ENCODE measurements at regions of chr6 and their contacts with region 1.

Region 1: DNA sequence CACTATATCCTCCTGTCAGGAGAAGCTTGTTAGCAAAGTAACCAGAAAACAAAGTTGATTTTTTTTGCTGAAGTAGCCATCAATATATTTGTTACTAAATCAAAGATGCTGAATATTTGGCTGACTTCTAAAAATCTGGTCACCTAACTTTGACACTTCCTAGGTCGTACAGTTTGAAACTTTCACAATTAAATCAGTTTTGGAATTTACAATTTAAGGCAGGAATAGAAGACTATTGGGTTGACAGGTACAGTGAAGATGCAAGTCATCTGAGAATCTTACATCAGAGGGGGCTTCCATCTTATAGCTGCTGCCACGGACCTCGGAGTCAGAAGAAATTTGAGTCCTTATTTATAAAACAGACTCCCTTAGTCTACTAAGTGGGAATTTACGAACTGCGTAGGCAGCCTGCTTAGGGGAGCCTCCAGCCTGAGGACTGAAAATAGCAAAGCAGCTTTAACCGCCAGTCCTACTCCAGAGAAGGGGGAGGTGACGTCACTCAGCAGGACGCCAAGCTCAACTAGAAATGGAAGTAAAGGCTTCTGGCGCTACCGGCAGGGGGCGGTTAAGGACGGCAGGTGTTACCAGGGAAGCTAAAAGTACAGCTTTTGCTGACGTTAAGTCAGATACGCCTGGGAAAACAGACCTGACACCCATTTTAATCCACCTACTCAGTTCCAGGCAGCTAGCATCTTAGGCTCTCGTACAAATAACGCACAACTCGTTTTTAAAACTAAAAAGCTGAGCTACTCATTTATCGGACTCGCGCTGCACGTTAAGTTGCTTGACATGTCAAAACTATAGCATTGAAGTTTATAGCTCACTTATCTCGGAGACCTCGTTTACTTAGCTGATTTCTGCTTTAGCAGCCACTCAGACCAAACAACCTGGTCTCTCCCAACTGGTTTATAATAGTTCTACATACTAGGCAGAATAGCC is 61.1 kb upstream of the HFE start:
- DNase-seq: peak; percentile 86 to 98
- ATAC-seq: peak; percentile 41 to 60 (median 44)
- H3K4me3 ChIP-seq: peak overlapping the region; percentile 52
- H3K4me3 Mint-ChIP-seq: peak overlapping the region; percentile 87
- H3K27ac ChIP-seq: peak overlapping the region; percentile 96
- H3K27ac Mint-ChIP-seq: peak overlapping the region; percentile 99 to 100
- H3K4me1 ChIP-seq: peaks cover 22% of the 10 kb centered on the region
- H3K4me1 Mint-ChIP-seq: peaks cover 38 to 42% of the 10 kb centered on the region in 2 donors
- H3K27me3 ChIP-seq: no peaks in the 10 kb centered on the region
- H3K27me3 Mint-ChIP-seq: peaks cover 0 to 2% of the 10 kb centered on the region in 2 donors
- CTCF ChIP-seq: peak; percentile 80

Region 2: GRCh38 chr6:24720604-24721460 is 1305.3 kb before region 1 on chr6:
- intact Hi-C with region 1: loop called (anchors 2 kb)
- DNase-seq: peak; percentile 100
- ATAC-seq: peak; percentile 75 to 93 (median 79)
- H3K4me3 ChIP-seq: peak overlapping the region; percentile 100
- H3K4me3 Mint-ChIP-seq: peak overlapping the region; percentile 100
- H3K27ac ChIP-seq: peak overlapping the region; percentile 100
- H3K27ac Mint-ChIP-seq: peak overlapping the region; percentile 96 to 99
- H3K4me1 ChIP-seq: peaks cover 28% of the 10 kb centered on the region
- H3K4me1 Mint-ChIP-seq: peaks cover 52 to 62% of the 10 kb centered on the region in 2 donors
- H3K27me3 ChIP-seq: no peaks in the 10 kb centered on the region
- H3K27me3 Mint-ChIP-seq: no peaks in the 10 kb centered on the region
- CTCF ChIP-seq: no peak

Region 3: DNA sequence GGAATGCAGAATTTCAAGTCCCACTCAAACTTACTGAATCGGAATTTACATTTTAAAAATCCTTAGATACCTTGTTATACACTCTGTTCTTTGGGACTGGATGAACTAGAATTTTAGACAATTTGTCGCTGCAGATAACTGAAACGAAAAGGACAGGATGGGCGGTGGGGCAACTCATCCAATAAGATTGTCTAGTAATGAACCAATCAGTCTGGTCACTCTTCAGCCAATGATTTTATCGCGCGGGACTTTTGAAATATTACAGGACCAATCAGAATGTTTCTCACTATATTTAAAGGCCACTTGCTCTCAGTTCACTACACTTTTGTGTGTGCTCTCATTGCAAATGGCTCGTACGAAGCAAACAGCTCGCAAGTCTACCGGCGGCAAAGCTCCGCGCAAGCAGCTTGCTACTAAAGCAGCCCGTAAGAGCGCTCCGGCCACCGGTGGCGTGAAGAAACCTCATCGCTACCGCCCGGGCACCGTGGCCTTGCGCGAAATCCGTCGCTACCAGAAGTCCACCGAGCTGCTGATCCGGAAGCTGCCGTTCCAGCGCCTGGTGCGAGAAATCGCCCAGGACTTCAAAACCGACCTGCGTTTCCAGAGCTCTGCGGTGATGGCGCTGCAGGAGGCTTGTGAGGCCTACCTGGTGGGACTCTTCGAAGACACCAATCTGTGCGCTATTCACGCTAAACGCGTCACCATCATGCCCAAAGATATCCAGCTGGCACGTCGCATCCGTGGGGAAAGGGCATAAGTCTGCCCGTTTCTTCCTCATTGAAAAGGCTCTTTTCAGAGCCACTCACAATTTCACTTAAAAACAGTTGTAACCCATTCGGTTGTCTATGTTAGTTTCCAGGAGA is 19.1 kb after region 1 on chr6:
- intact Hi-C with region 1: loop called (anchors 2 kb)
- DNase-seq: peak; percentile 64 to 92
- ATAC-seq: peak; percentile 52 to 73 (median 64)
- H3K4me3 ChIP-seq: peak overlapping the region; percentile 64
- H3K4me3 Mint-ChIP-seq: peak overlapping the region; percentile 95
- H3K27ac ChIP-seq: peak overlapping the region; percentile 91
- H3K27ac Mint-ChIP-seq: peak overlapping the region; percentile 97 to 98
- H3K4me1 ChIP-seq: peaks cover 26% of the 10 kb centered on the region
- H3K4me1 Mint-ChIP-seq: peaks cover 25 to 28% of the 10 kb centered on the region in 2 donors
- H3K27me3 ChIP-seq: no peaks in the 10 kb centered on the region
- H3K27me3 Mint-ChIP-seq: no peaks in the 10 kb centered on the region
- CTCF ChIP-seq: no peak

Region 4: DNA sequence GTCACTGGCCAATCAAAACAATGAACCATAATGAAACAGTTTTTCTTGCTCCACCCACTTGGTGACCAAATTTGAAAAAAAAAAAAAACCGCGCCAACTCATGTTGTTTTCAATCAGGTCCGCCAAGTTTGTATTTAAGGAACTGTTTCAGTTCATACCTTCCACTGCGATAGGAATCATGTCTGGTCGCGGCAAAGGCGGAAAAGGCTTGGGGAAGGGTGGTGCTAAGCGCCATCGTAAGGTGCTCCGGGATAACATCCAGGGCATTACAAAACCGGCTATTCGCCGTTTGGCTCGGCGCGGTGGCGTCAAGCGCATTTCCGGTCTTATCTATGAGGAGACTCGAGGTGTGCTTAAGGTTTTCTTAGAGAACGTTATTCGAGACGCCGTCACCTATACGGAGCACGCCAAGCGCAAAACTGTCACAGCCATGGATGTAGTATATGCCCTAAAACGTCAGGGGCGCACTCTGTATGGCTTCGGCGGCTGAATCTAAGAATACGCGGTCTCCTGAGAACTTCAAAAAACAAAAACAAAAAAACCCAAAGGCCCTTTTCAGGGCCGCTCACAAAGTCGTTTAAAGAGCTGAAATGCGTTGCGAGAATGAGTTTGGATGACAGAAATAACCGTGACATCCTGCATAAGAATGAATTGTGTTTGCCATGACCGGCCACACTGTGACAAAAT is 77.8 kb after region 1 on chr6:
- intact Hi-C with region 1: loop called (anchors 2 kb)
- DNase-seq: peak; percentile 86 to 95
- ATAC-seq: peak; percentile 87 to 96 (median 88)
- H3K4me3 ChIP-seq: peak overlapping the region; percentile 41
- H3K4me3 Mint-ChIP-seq: peak overlapping the region; percentile 90
- H3K27ac ChIP-seq: peak overlapping the region; percentile 84
- H3K27ac Mint-ChIP-seq: peak overlapping the region; percentile 98 to 99
- H3K4me1 ChIP-seq: peaks cover 10% of the 10 kb centered on the region
- H3K4me1 Mint-ChIP-seq: peaks cover 18% of the 10 kb centered on the region in 2 donors
- H3K27me3 ChIP-seq: no peaks in the 10 kb centered on the region
- H3K27me3 Mint-ChIP-seq: no peaks in the 10 kb centered on the region
- CTCF ChIP-seq: peak; percentile 41

Region 5: DNA sequence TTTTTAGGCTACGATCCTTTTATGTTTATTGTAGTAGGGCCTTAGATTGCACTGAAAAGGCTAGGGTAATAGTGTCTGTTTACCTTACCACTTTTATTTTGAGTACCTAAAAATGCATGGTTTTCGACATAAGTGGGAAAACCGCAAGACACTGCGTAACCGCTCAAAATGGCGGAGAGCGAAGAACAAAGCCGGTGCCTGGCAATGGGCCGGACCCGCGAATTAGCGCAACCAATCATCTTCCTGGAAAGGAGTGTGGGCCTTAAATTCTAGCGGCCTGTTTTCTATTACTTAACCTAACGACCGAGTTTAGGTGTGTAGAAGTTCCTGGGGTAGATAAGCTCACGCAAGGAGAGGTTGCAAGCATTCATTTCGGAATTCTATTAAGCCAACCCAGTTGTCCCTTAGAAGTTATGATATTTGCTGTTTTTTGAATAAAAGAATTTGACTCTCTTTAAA is 179.0 kb after region 1 on chr6:
- intact Hi-C with region 1: no loop called
- DNase-seq: peak; percentile 78 to 94
- ATAC-seq: peak; percentile 68 to 84 (median 74)
- H3K4me3 ChIP-seq: peak overlapping the region; percentile 81
- H3K4me3 Mint-ChIP-seq: no peak overlapping the region
- H3K27ac ChIP-seq: peak overlapping the region; percentile 96
- H3K27ac Mint-ChIP-seq: no peak overlapping the region
- H3K4me1 ChIP-seq: peaks cover 21% of the 10 kb centered on the region
- H3K4me1 Mint-ChIP-seq: peaks cover 6 to 14% of the 10 kb centered on the region in 2 donors
- H3K27me3 ChIP-seq: no peaks in the 10 kb centered on the region
- H3K27me3 Mint-ChIP-seq: no peaks in the 10 kb centered on the region
- CTCF ChIP-seq: no peak

Region 6: GRCh38 chr6:26312501-26313390 is 286.6 kb after region 1 on chr6:
- intact Hi-C with region 1: no loop called
- DNase-seq: peak; percentile 79 to 93
- ATAC-seq: peak; percentile 52 to 75 (median 68)
- H3K4me3 ChIP-seq: peak overlapping the region; percentile 59
- H3K4me3 Mint-ChIP-seq: peak overlapping the region; percentile 98
- H3K27ac ChIP-seq: peak overlapping the region; percentile 36
- H3K27ac Mint-ChIP-seq: peak overlapping the region; percentile 98 to 99
- H3K4me1 ChIP-seq: peaks cover 20% of the 10 kb centered on the region
- H3K4me1 Mint-ChIP-seq: peaks cover 58% of the 10 kb centered on the region in 2 donors
- H3K27me3 ChIP-seq: no peaks in the 10 kb centered on the region
- H3K27me3 Mint-ChIP-seq: peaks cover 6 to 13% of the 10 kb centered on the region in 2 donors
- CTCF ChIP-seq: no peak

Region 7: DNA sequence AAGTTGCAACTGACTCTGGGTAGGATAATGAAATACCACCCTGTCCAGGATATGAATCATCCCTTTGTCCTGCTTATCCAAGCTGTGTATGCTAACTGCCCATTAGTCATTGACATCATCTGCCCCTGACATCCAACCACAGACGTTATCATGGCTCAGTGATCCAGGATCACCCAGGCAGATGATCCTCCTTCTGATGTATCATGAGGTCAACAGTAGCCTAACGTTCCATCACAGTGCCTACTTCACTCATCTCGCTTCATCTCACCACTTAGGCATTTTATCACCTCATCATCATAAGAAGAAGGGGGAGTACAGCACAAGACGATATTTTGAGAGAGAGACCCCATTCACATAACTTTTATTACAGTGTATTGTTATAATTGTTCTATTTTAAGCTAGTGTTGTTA is 325.4 kb after region 1 on chr6:
- intact Hi-C with region 1: no loop called
- DNase-seq: no peak
- ATAC-seq: peak in 1 of 3 donors; percentile 18
- H3K4me3 ChIP-seq: no peak overlapping the region
- H3K4me3 Mint-ChIP-seq: no peak overlapping the region
- H3K27ac ChIP-seq: no peak overlapping the region
- H3K27ac Mint-ChIP-seq: no peak overlapping the region
- H3K4me1 ChIP-seq: no peaks in the 10 kb centered on the region
- H3K4me1 Mint-ChIP-seq: no peaks in the 10 kb centered on the region
- H3K27me3 ChIP-seq: no peaks in the 10 kb centered on the region
- H3K27me3 Mint-ChIP-seq: peaks cover 0 to 7% of the 10 kb centered on the region in 2 donors
- CTCF ChIP-seq: no peak

Region 8: DNA sequence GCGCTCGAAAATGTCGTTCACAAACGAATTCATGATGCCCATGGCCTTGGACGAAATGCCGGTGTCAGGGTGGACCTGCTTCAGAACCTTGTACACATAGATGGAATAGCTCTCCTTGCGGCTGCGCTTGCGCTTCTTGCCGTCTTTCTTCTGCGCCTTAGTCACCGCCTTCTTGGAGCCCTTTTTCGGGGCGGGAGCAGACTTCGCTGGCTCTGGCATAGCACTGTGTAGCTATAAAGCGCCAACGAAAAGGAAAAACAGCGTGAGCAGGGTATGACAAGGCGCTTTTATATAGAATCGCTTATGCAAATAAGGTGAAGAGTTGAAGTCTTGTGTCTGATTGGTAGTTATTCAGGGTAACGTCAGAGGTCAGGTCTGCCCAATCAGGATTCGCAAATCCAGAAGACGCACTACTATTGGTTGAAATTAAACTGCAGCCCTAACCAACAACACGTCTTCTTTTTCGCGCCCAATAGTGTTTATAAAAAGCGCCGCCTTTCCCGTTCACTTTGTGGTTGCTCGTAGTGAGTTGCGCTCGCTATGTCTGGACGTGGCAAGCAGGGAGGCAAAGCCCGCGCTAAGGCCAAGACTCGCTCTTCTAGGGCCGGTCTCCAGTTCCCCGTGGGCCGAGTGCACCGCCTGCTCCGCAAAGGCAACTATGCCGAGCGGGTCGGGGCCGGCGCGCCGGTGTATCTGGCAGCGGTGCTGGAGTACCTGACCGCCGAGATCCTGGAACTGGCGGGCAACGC is 1106.5 kb after region 1 on chr6:
- intact Hi-C with region 1: loop called (anchors 5 kb)
- DNase-seq: peak; percentile 87 to 98
- ATAC-seq: peak; percentile 82 to 95 (median 87)
- H3K4me3 ChIP-seq: peak overlapping the region; percentile 65
- H3K4me3 Mint-ChIP-seq: no peak overlapping the region
- H3K27ac ChIP-seq: peak overlapping the region; percentile 85
- H3K27ac Mint-ChIP-seq: no peak overlapping the region
- H3K4me1 ChIP-seq: peaks cover 29% of the 10 kb centered on the region
- H3K4me1 Mint-ChIP-seq: peaks cover 5 to 6% of the 10 kb centered on the region in 2 donors
- H3K27me3 ChIP-seq: no peaks in the 10 kb centered on the region
- H3K27me3 Mint-ChIP-seq: no peaks in the 10 kb centered on the region
- CTCF ChIP-seq: no peak

Measured in natural killer cell (primary cell).